ENCODE measurements at regions of chr17 and their contacts with region 1.

Region 1: GRCh38 chr17:82022981-82023374 is at the start of gene LRRC45:
- DNase-seq: peak; percentile 97
- ATAC-seq: peak; percentile 96
- H3K4me3 Mint-ChIP-seq: peak within 1 kb of the TSS; percentile 85
- H3K27ac Mint-ChIP-seq: no peak within 1 kb of the TSS
- H3K4me1 Mint-ChIP-seq: peaks cover 22% of the 10 kb centered on the region
- H3K27me3 Mint-ChIP-seq: no peaks in the 10 kb centered on the region
- CTCF ChIP-seq: no peak
- total RNA-seq, gene LRRC45: 10.6 and 10.8 TPM in 2 replicates

Region 2: GRCh38 chr17:81833160-81833920 is 189.6 kb before region 1 on chr17 and contains the start of gene MCRIP1:
- CTCF ChIA-PET with region 1: no interaction called
- POLR2A ChIA-PET with region 1: interaction called, 12 read pairs
- intact Hi-C with region 1: loop called (anchors 1 kb)
- DNase-seq: peak; percentile 97
- ATAC-seq: peak; percentile 81
- H3K4me3 Mint-ChIP-seq: peak within 1 kb of the TSS; percentile 92
- H3K27ac Mint-ChIP-seq: peak within 1 kb of the TSS; percentile 91
- H3K4me1 Mint-ChIP-seq: peaks cover 22% of the 10 kb centered on the region
- H3K27me3 Mint-ChIP-seq: no peaks in the 10 kb centered on the region
- CTCF ChIP-seq: no peak
- total RNA-seq, gene MCRIP1: 75.0 and 90.4 TPM in 2 replicates

Region 3: GRCh38 chr17:81959362-81960129 is 63.4 kb before region 1 on chr17:
- CTCF ChIA-PET with region 1: interaction called, 59 read pairs
- POLR2A ChIA-PET with region 1: interaction called, 11 read pairs
- intact Hi-C with region 1: loop called (anchors 1 kb)
- DNase-seq: peak; percentile 90
- ATAC-seq: peak; percentile 95
- H3K4me3 Mint-ChIP-seq: no peak overlapping the region
- H3K27ac Mint-ChIP-seq: no peak overlapping the region
- H3K4me1 Mint-ChIP-seq: peaks cover 4% of the 10 kb centered on the region
- H3K27me3 Mint-ChIP-seq: peaks cover 25% of the 10 kb centered on the region
- CTCF ChIP-seq: peak; percentile 20

Region 4: GRCh38 chr17:81977211-81978027 is 45.6 kb before region 1 on chr17 and contains the start of gene ASPSCR1:
- CTCF ChIA-PET with region 1: no interaction called
- POLR2A ChIA-PET with region 1: interaction called, 5 read pairs
- intact Hi-C with region 1: loop called (anchors 1 kb)
- DNase-seq: peak; percentile 94
- ATAC-seq: peak; percentile 92
- H3K4me3 Mint-ChIP-seq: peak within 1 kb of the TSS; percentile 95
- H3K27ac Mint-ChIP-seq: peak within 1 kb of the TSS; percentile 93
- H3K4me1 Mint-ChIP-seq: peaks cover 27% of the 10 kb centered on the region
- H3K27me3 Mint-ChIP-seq: no peaks in the 10 kb centered on the region
- CTCF ChIP-seq: no peak
- total RNA-seq, gene ASPSCR1: 40.0 and 50.0 TPM in 2 replicates

Measured in activated B cell treated with CpG ODN at 0.5 μM for 24 hours (primary cell).